ENCODE measurements at regions of chrX and their contacts with region 1.

Region 1: GRCh38 chrX:13607996-13608365 is 38.6 kb downstream of the EGFL6 start:
- DNase-seq: no peak
- ATAC-seq: no peak
- H3K4me3 ChIP-seq: no peak overlapping the region
- H3K4me3 Mint-ChIP-seq: no peak overlapping the region
- H3K27ac ChIP-seq: no peak overlapping the region
- H3K27ac Mint-ChIP-seq: no peak overlapping the region
- H3K4me1 ChIP-seq: no peaks in the 10 kb centered on the region
- H3K4me1 Mint-ChIP-seq: no peaks in the 10 kb centered on the region
- H3K27me3 ChIP-seq: no peaks in the 10 kb centered on the region
- H3K27me3 Mint-ChIP-seq: peaks cover 4% of the 10 kb centered on the region
- CTCF ChIP-seq: no peak

Region 2: DNA sequence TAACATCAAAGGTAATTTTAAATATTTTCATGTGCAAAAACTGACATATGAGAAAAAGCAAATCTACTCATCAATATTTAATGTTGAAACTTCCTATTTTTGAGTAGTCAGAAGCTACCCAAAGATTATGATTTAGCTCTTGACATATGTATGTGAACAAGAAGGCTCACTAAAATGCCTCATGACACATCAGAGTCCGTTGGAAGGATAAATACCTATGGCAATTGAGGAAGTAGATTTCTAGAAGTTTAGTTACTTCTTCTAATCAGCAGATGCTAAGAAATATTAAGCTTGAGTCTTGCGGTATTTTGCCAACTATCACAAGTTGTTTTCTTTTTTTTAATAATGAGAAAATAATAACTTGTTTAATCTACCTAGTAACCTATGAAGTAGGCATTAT is 1794.6 kb before region 1 on chrX:
- CTCF ChIA-PET with region 1: no interaction called
- POLR2A ChIA-PET with region 1: no interaction called
- intact Hi-C with region 1: loop called in 1 of 2 experiments (anchors 10 kb)
- DNase-seq: no peak
- ATAC-seq: no peak
- H3K4me3 ChIP-seq: no peak overlapping the region
- H3K4me3 Mint-ChIP-seq: no peak overlapping the region
- H3K27ac ChIP-seq: no peak overlapping the region
- H3K27ac Mint-ChIP-seq: no peak overlapping the region
- H3K4me1 ChIP-seq: no peaks in the 10 kb centered on the region
- H3K4me1 Mint-ChIP-seq: no peaks in the 10 kb centered on the region
- H3K27me3 ChIP-seq: no peaks in the 10 kb centered on the region
- H3K27me3 Mint-ChIP-seq: no peaks in the 10 kb centered on the region
- CTCF ChIP-seq: no peak

Region 3: DNA sequence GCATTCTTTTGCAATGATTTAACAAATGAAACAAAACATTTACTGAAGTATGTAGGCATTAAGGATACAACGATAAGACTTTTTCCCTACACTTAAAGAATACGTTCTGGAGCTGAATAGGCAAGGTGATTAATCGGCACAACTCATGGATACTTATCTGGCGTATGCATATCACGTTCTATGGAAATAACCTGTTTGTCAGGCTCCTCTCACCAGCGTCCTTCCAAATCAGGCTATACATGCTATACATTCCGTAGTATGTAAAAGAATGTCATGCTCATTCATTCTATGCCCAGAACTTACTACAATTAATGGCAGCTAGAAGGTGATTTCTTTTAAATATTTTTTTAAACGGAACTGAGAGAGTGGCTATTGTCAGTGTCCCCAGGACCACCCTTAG is 19.3 kb after region 1 on chrX:
- CTCF ChIA-PET with region 1: no interaction called
- POLR2A ChIA-PET with region 1: no interaction called
- intact Hi-C with region 1: no loop called
- DNase-seq: no peak
- ATAC-seq: no peak
- H3K4me3 ChIP-seq: no peak overlapping the region
- H3K4me3 Mint-ChIP-seq: no peak overlapping the region
- H3K27ac ChIP-seq: no peak overlapping the region
- H3K27ac Mint-ChIP-seq: no peak overlapping the region
- H3K4me1 ChIP-seq: no peaks in the 10 kb centered on the region
- H3K4me1 Mint-ChIP-seq: no peaks in the 10 kb centered on the region
- H3K27me3 ChIP-seq: peaks cover 2 to 4% of the 10 kb centered on the region in 2 experiments
- H3K27me3 Mint-ChIP-seq: no peaks in the 10 kb centered on the region
- CTCF ChIP-seq: no peak

Region 4: DNA sequence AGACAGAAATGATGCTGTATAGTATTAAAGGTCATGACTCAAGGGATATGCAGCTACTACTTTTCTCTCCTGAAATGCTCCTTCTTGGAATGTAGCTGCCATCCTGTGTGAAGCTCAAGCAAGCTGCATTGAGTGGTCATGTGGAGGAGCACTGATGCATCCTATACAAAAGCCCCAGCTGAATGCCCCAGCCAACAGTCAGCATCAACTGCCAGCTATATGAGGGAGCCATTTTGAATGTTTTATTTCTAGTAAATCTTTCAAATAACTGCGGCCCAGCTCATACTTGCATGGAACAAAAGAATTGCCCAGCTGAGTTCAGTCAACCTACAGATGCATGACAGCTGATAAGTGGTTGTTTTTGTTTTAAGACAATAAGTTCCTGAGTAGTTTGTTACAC is 586.7 kb after region 1 on chrX:
- CTCF ChIA-PET with region 1: no interaction called
- POLR2A ChIA-PET with region 1: no interaction called
- intact Hi-C with region 1: no loop called
- DNase-seq: no peak
- ATAC-seq: no peak
- H3K4me3 ChIP-seq: no peak overlapping the region
- H3K4me3 Mint-ChIP-seq: no peak overlapping the region
- H3K27ac ChIP-seq: no peak overlapping the region
- H3K27ac Mint-ChIP-seq: no peak overlapping the region
- H3K4me1 ChIP-seq: no peaks in the 10 kb centered on the region
- H3K4me1 Mint-ChIP-seq: no peaks in the 10 kb centered on the region
- H3K27me3 ChIP-seq: no peaks in the 10 kb centered on the region
- H3K27me3 Mint-ChIP-seq: no peaks in the 10 kb centered on the region
- CTCF ChIP-seq: no peak